Naive thymus-derived CD4-positive, alpha-beta T cell (primary cell): ENCODE measurements at regions of chr21 and their contacts with region 1.

Region 1: GRCh38 chr21:42593007-42593806 is 60.2 kb upstream of the PDE9A start:
- DNase-seq: peak; percentile 52 to 75 (median 68)
- ATAC-seq: peak; percentile 81
- H3K4me3 ChIP-seq: no peak overlapping the region
- H3K4me3 Mint-ChIP-seq: peak overlapping the region in 1 of 10 donors; percentile 25
- H3K27ac ChIP-seq: no peak overlapping the region
- H3K27ac Mint-ChIP-seq: peak overlapping the region in 1 of 9 donors; percentile 15
- H3K4me1 ChIP-seq: peaks cover 0 to 13% of the 10 kb centered on the region in 2 donors
- H3K4me1 Mint-ChIP-seq: peaks cover 0 to 29% (median 22%) of the 10 kb centered on the region in 7 donors
- H3K27me3 ChIP-seq: no peaks in the 10 kb centered on the region
- H3K27me3 Mint-ChIP-seq: no peaks in the 10 kb centered on the region

Region 2: GRCh38 chr21:42652527-42653230 is 59.5 kb after region 1 on chr21:
- CTCF ChIA-PET with region 1: no interaction called
- POLR2A ChIA-PET with region 1: interaction called, 3 read pairs
- intact Hi-C with region 1: loop called in 1 of 2 experiments (anchors 5 kb)
- DNase-seq: no peak
- ATAC-seq: no peak
- H3K4me3 ChIP-seq: no peak overlapping the region
- H3K4me3 Mint-ChIP-seq: peak overlapping the region; percentile 68 to 88 (median 84)
- H3K27ac ChIP-seq: no peak overlapping the region
- H3K27ac Mint-ChIP-seq: peak overlapping the region in 8 of 9 donors; percentile 1 to 86 (median 68)
- H3K4me1 ChIP-seq: peaks cover 0 to 15% of the 10 kb centered on the region in 2 donors
- H3K4me1 Mint-ChIP-seq: peaks cover 17 to 29% (median 24%) of the 10 kb centered on the region in 7 donors
- H3K27me3 ChIP-seq: peaks cover 0 to 4% of the 10 kb centered on the region in 2 donors
- H3K27me3 Mint-ChIP-seq: peaks cover 0 to 50% (median 0%) of the 10 kb centered on the region in 5 donors

Region 3: GRCh38 chr21:42760951-42761680 is 167.9 kb after region 1 on chr21:
- CTCF ChIA-PET with region 1: no interaction called
- POLR2A ChIA-PET with region 1: no interaction called
- intact Hi-C with region 1: no loop called
- DNase-seq: no peak
- ATAC-seq: peak; percentile 36
- H3K4me3 ChIP-seq: no peak overlapping the region
- H3K4me3 Mint-ChIP-seq: no peak overlapping the region
- H3K27ac ChIP-seq: no peak overlapping the region
- H3K27ac Mint-ChIP-seq: peak overlapping the region in 2 of 9 donors; percentile 16 to 31
- H3K4me1 ChIP-seq: no peaks in the 10 kb centered on the region
- H3K4me1 Mint-ChIP-seq: peaks cover 0 to 6% (median 0%) of the 10 kb centered on the region in 7 donors
- H3K27me3 ChIP-seq: no peaks in the 10 kb centered on the region
- H3K27me3 Mint-ChIP-seq: no peaks in the 10 kb centered on the region